Heart right ventricle (tissue), 16 donors: ENCODE measurements at regions of chr10 and their contacts with region 1.

Region 1: GRCh38 chr10:104614245-104614831 is 26.8 kb upstream of the SORCS3 start:
- DNase-seq: no peak
- ATAC-seq: no peak
- H3K4me3 ChIP-seq: no peak overlapping the region
- H3K27ac ChIP-seq: no peak overlapping the region
- H3K4me1 ChIP-seq: no peaks in the 10 kb centered on the region
- H3K27me3 ChIP-seq: peaks cover 0 to 35% (median 16%) of the 10 kb centered on the region in 7 donors
- CTCF ChIP-seq: peak in 6 of 9 donors; percentile 25 to 56 (median 34)

Region 2: DNA sequence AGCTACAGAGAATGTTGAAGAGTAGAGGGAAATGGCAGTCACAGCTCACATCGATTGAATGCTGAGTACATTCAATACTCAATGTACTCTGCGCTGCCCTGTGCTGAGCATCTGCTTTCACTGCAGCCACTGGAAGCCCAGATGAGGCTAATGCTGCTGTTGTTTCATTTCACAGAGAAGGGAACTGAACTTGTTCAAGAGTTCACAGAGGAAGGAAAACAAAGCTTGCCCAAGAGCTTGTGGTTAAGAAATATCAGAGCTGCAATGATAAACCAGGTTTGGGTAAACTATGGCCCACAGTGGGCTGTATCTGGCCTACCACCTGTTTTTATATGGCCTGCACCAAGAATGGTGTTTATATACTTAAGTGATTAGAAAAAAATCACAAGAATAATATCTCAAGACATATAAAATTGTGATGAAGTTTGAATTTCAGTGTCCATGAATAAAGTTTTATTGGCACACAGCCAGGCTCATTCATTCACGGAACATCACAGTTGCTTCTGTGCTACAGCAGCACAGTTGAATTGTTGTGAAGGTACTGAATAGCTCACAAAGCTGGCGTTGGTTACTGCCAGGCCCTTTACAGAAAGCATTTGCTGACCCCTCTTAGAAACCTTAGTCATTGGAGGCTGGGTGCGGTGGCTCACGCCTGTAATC is 196.6 kb before region 1 on chr10:
- intact Hi-C with region 1: loop called in 1 of 10 experiments (anchors 10 kb)
- DNase-seq: no peak
- ATAC-seq: peak in 1 of 8 donors; percentile 22
- H3K4me3 ChIP-seq: no peak overlapping the region
- H3K27ac ChIP-seq: peak overlapping the region in 1 of 10 donors; percentile 42
- H3K4me1 ChIP-seq: peaks cover 0 to 13% (median 0%) of the 10 kb centered on the region in 9 donors
- H3K27me3 ChIP-seq: no peaks in the 10 kb centered on the region
- CTCF ChIP-seq: no peak

Region 3: DNA sequence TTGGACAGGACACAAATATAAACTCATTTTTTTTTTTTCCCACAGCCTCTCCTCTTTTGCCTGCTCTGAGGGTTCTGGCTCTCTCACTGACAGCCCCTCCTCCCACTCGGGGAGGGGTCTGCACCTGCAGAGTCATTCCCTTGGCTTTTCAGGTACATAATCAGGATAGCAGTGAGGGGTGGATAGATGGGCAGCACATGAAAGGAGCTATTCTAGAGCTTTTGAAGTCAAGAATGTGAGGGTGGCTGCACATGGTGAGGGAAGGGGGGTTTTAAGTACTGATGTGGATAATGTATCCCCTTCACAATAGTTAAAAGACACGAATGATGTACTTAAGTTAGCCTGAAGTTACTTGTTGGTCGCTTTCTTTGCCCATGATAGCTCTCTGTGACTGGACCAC is 184.5 kb before region 1 on chr10:
- intact Hi-C with region 1: no loop called
- DNase-seq: no peak
- ATAC-seq: no peak
- H3K4me3 ChIP-seq: no peak overlapping the region
- H3K27ac ChIP-seq: no peak overlapping the region
- H3K4me1 ChIP-seq: no peaks in the 10 kb centered on the region
- H3K27me3 ChIP-seq: no peaks in the 10 kb centered on the region
- CTCF ChIP-seq: no peak

Region 4: GRCh38 chr10:104501864-104502579 is 112.3 kb before region 1 on chr10:
- intact Hi-C with region 1: no loop called
- DNase-seq: no peak
- ATAC-seq: peak in 1 of 8 donors; percentile 35
- H3K4me3 ChIP-seq: no peak overlapping the region
- H3K27ac ChIP-seq: no peak overlapping the region
- H3K4me1 ChIP-seq: no peaks in the 10 kb centered on the region
- H3K27me3 ChIP-seq: peaks cover 0 to 37% (median 6%) of the 10 kb centered on the region in 7 donors
- CTCF ChIP-seq: no peak